Activated CD4-positive, alpha-beta memory T cell treated with anti-CD3 and anti-CD28 coated beads for 36 hours (primary cell): ENCODE measurements at regions of chr11 and their contacts with region 1.

Region 1: DNA sequence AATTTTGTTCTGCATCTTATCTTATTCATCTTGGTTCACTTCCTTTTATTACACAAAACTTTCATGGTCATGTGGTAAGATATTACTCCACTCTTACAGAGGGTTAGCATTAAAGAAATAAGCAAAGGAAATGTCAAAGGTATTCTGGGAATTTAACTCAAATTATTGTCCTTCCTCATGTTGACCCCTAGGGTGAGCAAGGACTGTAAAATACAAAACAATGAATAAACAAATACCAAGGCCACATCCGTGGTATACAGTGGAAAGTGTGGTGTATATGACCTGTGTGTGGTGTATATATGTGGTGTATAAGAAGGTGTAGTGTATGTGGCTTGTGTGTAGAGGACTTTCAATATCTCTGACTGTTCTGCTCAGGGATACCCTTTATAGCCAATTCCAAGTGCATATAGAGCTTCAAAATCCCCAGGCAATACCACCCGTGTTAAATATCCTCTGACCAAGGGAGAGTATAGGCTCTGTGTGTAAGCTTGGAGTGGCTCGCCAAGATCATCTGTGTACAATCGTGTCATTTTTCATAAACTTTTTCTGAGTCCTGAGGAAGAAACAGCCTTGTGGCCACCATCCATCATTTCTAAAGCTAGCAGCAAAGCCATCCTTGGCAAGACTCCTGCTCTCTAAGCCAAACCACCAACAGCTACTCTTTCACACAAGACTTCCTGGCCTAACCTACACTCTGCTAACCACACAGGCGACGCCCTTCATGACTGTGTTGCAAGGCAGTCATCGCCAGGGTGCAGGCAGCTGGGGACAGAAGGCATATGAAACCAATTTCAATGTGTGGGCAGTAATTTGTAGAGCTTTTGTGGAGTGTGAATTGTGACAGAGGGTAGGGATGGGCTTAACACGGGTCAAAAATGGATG is 548.0 kb downstream of the ETS1 start:
- DNase-seq: peak; percentile 90
- H3K4me3 Mint-ChIP-seq: peak overlapping the region; percentile 61
- H3K27ac Mint-ChIP-seq: peak overlapping the region; percentile 89
- H3K4me1 Mint-ChIP-seq: peaks cover 52% of the 10 kb centered on the region
- H3K27me3 Mint-ChIP-seq: no peaks in the 10 kb centered on the region

Region 2: GRCh38 chr11:127609025-127609773 is 430.2 kb before region 1 on chr11:
- CTCF ChIA-PET with region 1: no interaction called
- POLR2A ChIA-PET with region 1: no interaction called
- intact Hi-C with region 1: no loop called
- DNase-seq: no peak
- H3K4me3 Mint-ChIP-seq: no peak overlapping the region
- H3K27ac Mint-ChIP-seq: no peak overlapping the region
- H3K4me1 Mint-ChIP-seq: no peaks in the 10 kb centered on the region
- H3K27me3 Mint-ChIP-seq: no peaks in the 10 kb centered on the region

Region 3: GRCh38 chr11:127939000-127939399 is 100.4 kb before region 1 on chr11:
- CTCF ChIA-PET with region 1: no interaction called
- POLR2A ChIA-PET with region 1: no interaction called
- intact Hi-C with region 1: no loop called
- DNase-seq: no peak
- H3K4me3 Mint-ChIP-seq: no peak overlapping the region
- H3K27ac Mint-ChIP-seq: no peak overlapping the region
- H3K4me1 Mint-ChIP-seq: peaks cover 12% of the 10 kb centered on the region
- H3K27me3 Mint-ChIP-seq: peaks cover 24% of the 10 kb centered on the region

Region 4: GRCh38 chr11:128052912-128053641 is 13.7 kb after region 1 on chr11:
- CTCF ChIA-PET with region 1: interaction called, 4 read pairs
- POLR2A ChIA-PET with region 1: interaction called, 9 read pairs
- intact Hi-C with region 1: loop called (anchors 1 kb)
- DNase-seq: no peak
- H3K4me3 Mint-ChIP-seq: peak overlapping the region; percentile 70
- H3K27ac Mint-ChIP-seq: peak overlapping the region; percentile 94
- H3K4me1 Mint-ChIP-seq: peaks cover 67% of the 10 kb centered on the region
- H3K27me3 Mint-ChIP-seq: no peaks in the 10 kb centered on the region

Region 5: GRCh38 chr11:128105950-128106349 is 66.6 kb after region 1 on chr11:
- CTCF ChIA-PET with region 1: interaction called, 8 read pairs
- POLR2A ChIA-PET with region 1: interaction called, 11 read pairs
- intact Hi-C with region 1: loop called (anchors 1 kb)
- DNase-seq: no peak
- H3K4me3 Mint-ChIP-seq: no peak overlapping the region
- H3K27ac Mint-ChIP-seq: no peak overlapping the region
- H3K4me1 Mint-ChIP-seq: peaks cover 33% of the 10 kb centered on the region
- H3K27me3 Mint-ChIP-seq: peaks cover 3% of the 10 kb centered on the region

Region 6: GRCh38 chr11:128302425-128303186 is 263.2 kb after region 1 on chr11:
- CTCF ChIA-PET with region 1: no interaction called
- POLR2A ChIA-PET with region 1: no interaction called
- intact Hi-C with region 1: no loop called
- DNase-seq: peak; percentile 81
- H3K4me3 Mint-ChIP-seq: peak overlapping the region; percentile 79
- H3K27ac Mint-ChIP-seq: peak overlapping the region; percentile 94
- H3K4me1 Mint-ChIP-seq: peaks cover 78% of the 10 kb centered on the region
- H3K27me3 Mint-ChIP-seq: no peaks in the 10 kb centered on the region

Region 7: GRCh38 chr11:128506999-128507611 is 467.7 kb after region 1 on chr11:
- CTCF ChIA-PET with region 1: no interaction called
- POLR2A ChIA-PET with region 1: no interaction called
- intact Hi-C with region 1: loop called (anchors 10 kb)
- DNase-seq: peak; percentile 74
- H3K4me3 Mint-ChIP-seq: peak overlapping the region; percentile 77
- H3K27ac Mint-ChIP-seq: peak overlapping the region; percentile 96
- H3K4me1 Mint-ChIP-seq: peaks cover 90% of the 10 kb centered on the region
- H3K27me3 Mint-ChIP-seq: no peaks in the 10 kb centered on the region

Region 8: DNA sequence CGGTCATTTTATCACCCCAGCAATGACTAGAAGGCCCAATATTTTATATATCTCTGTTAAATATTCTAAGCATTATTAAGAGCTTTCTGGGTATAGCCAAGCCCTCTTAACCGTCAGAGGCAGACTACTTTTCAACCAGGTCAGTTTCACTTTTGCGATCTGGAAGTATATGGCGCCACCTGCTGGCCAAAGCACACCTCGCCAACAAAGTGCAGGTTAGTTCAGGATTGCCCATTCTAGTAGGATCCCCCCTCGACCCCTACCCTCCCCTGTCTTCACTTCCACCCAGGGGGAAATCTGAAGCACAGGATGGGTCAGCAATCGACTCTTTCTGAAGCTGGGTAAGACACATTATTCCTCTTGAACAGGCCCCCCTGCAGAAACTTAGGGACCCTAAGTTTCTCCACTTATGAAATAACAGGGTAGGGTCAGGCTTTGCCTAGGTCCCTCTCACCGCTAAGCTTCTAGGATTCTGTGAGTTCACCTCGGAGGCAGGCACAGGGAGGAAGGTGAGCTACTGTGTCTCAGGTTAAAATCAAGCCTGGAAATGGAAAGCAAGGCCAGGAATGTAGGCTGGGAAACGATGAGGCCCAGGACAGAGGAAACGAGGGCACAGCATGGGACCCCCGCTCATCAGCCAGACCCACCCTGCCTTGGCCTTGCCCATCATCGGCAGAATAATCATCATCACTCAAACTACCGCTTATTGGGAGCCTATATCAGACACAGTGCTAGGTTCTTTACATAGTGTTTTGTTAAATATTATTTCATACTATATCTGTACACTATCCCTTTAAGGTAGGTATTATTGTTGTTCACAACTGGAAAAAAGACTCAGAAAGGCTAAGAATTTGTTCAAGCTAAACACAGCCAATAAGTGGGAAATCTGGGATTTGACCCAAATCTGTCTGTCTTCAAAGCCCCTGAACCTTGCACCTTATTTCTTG is 792.1 kb after region 1 on chr11:
- CTCF ChIA-PET with region 1: interaction called, 9 read pairs
- POLR2A ChIA-PET with region 1: interaction called, 5 read pairs
- intact Hi-C with region 1: loop called (anchors 2 kb)
- DNase-seq: peak; percentile 93
- H3K4me3 Mint-ChIP-seq: peak overlapping the region; percentile 30
- H3K27ac Mint-ChIP-seq: peak overlapping the region; percentile 89
- H3K4me1 Mint-ChIP-seq: peaks cover 19% of the 10 kb centered on the region
- H3K27me3 Mint-ChIP-seq: no peaks in the 10 kb centered on the region

Region 9: GRCh38 chr11:128956401-128957201 is 917.2 kb after region 1 on chr11:
- CTCF ChIA-PET with region 1: no interaction called
- POLR2A ChIA-PET with region 1: no interaction called
- intact Hi-C with region 1: loop called (anchors 5 kb)
- DNase-seq: no peak
- H3K4me3 Mint-ChIP-seq: no peak overlapping the region
- H3K27ac Mint-ChIP-seq: no peak overlapping the region
- H3K4me1 Mint-ChIP-seq: peaks cover 2% of the 10 kb centered on the region
- H3K27me3 Mint-ChIP-seq: peaks cover 15% of the 10 kb centered on the region